ENCODE measurements at regions of chr3 and their contacts with region 1.

Region 1: GRCh38 chr3:141030296-141030695 is 20.9 kb upstream of the SPSB4 start:
- DNase-seq: no peak
- H3K4me3 ChIP-seq: no peak overlapping the region
- H3K27ac ChIP-seq: no peak overlapping the region
- H3K4me1 ChIP-seq: no peaks in the 10 kb centered on the region
- H3K27me3 ChIP-seq: no peaks in the 10 kb centered on the region
- CTCF ChIP-seq: no peak
- EP300 ChIP-seq: no peak
- POLR2A ChIP-seq: no peak

Region 2: DNA sequence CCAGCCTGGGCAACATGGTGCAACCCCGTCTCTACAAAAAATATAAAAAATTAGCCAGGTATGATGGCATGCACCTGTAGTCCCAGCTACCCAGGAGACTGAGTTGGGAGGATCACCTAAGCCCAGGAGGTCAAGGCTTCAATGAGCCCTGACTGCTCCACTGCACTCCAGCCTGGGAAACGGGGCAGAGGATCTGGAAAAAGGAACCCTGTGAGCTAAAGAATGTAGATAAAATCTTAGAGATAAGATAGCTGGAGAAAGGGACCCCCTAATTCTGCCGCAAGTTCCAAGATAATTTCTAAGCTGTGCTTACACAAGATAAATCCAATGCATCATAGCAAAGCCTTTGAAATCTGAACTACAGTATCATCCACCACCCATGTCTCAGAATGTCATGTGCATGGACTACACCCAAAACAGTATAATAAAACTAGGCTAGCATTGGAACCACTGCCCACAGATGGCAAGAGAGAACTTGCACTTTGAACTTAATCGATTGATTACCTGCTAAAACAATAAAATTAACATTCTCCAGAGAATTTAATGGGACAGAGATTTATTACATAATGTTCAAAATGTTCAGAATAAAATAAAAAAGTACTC is 252.6 kb before region 1 on chr3:
- in situ Hi-C with region 1: no loop called
- intact Hi-C with region 1: no loop called
- DNase-seq: no peak
- H3K4me3 ChIP-seq: no peak overlapping the region
- H3K27ac ChIP-seq: no peak overlapping the region
- H3K4me1 ChIP-seq: no peaks in the 10 kb centered on the region
- H3K27me3 ChIP-seq: no peaks in the 10 kb centered on the region
- CTCF ChIP-seq: no peak
- EP300 ChIP-seq: no peak
- POLR2A ChIP-seq: no peak

Region 3: GRCh38 chr3:141291559-141292355 is 261.5 kb after region 1 on chr3:
- in situ Hi-C with region 1: no loop called
- intact Hi-C with region 1: no loop called
- DNase-seq: no peak
- H3K4me3 ChIP-seq: no peak overlapping the region
- H3K27ac ChIP-seq: peak overlapping the region in 2 of 4 donors; percentile 34 to 43
- H3K4me1 ChIP-seq: peaks cover 0 to 11% (median 0%) of the 10 kb centered on the region in 4 donors
- H3K27me3 ChIP-seq: no peaks in the 10 kb centered on the region
- CTCF ChIP-seq: no peak
- EP300 ChIP-seq: no peak
- POLR2A ChIP-seq: no peak

Region 4: DNA sequence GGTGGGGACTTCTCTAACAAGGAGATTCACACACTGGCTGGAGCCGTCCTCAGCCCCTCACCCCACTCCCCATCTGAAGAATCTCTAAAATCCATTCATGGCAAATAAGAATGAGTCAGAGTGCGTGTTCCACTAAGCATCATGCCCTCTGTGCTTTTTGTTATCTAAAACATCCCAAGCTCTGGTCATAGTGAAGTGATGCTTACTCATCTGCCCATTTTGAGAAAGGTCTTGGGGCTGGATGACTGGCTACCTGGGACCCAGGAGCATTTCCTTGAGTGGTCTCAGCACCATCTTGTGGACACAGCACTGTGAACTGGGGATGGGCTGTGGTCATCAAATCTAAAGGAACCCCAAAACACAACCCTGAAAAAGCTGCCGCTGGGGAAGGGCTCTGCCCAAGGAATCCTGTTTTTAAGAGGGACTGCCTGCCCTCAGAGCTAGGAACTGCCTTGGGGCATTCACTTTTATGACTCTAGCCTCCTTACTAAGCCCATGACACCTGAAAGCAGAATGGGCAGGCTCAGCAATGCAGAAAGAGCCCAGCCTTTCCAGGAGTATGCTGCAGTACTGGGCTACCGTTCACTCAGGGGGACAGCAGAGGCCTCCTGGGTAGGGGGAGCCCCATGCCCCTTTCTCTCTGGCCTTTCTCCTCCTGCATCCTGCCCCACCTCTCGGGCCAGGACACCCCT is 391.5 kb after region 1 on chr3:
- in situ Hi-C with region 1: no loop called
- intact Hi-C with region 1: loop called (anchors 5 kb)
- DNase-seq: no peak
- H3K4me3 ChIP-seq: no peak overlapping the region
- H3K27ac ChIP-seq: peak overlapping the region in 2 of 4 donors; percentile 1 to 24
- H3K4me1 ChIP-seq: peaks cover 16 to 53% (median 29%) of the 10 kb centered on the region in 4 donors
- H3K27me3 ChIP-seq: no peaks in the 10 kb centered on the region
- CTCF ChIP-seq: no peak
- EP300 ChIP-seq: no peak
- POLR2A ChIP-seq: no peak

Measured in transverse colon (tissue), 4 donors.